HCT116 (cell line): ENCODE measurements at regions of chr3 and their contacts with region 1.

Region 1: GRCh38 chr3:107740992-107741896 is 218.5 kb downstream of the BBX start:
- DNase-seq: no peak
- ATAC-seq: no peak
- H3K4me3 ChIP-seq: no peak overlapping the region
- H3K27ac ChIP-seq: no peak overlapping the region
- H3K4me1 ChIP-seq: no peaks in the 10 kb centered on the region
- H3K27me3 ChIP-seq: no peaks in the 10 kb centered on the region
- CTCF ChIP-seq: peak; percentile 19 to 55 (median 35); a peak in 3 of 6 replicates
- POLR2A ChIP-seq: no peak
- RAD21 ChIP-seq: peak; percentile 51

Region 2: DNA sequence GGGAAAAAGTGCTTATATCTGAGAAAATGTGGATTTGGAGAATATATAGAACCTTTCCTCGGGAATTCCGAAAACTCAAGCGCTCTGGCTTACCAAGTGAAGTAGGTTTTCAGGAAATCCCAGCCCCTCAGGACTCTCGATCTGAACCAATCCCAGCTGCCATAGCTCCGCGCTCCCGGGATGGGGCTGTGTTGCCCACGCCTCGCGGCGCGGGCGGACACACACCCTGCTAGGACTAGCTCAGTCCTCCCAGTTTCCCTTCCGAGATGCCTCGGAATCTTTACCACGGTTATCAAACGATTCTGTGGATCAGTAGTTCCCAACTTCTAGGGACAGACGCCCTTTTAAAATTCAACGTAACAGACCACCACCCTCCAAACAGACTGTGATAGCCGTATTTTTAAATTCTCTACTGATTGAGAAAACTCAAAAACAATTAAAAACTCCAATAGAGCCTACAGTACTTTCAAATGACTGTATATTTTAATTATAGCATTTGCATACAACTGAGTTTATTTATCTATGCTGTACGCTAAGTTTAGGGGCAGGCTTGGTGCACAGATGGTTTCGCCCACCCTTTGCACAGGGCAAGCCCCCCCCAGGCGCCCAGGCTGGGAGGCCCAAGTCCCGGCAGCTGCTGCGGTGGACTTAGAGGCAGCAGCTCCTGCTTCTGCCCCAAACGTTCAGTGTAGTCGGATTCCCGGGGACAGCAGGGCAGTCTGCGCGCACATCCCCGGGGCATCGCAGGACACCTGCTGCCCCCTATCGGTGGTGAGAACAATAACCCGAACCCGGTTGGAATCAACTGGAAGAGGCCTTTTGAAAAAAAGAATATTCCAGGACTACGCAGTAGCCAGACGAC is 311.7 kb before region 1 on chr3:
- CTCF ChIA-PET with region 1: no interaction called
- POLR2A ChIA-PET with region 1: no interaction called
- RAD21 ChIA-PET with region 1: no interaction called
- intact Hi-C with region 1: loop called (anchors 10 kb)
- DNase-seq: peak; percentile 67
- ATAC-seq: peak; percentile 87
- H3K4me3 ChIP-seq: 0 out of 4 replicates have a peak overlapping the region, but pooled peaks of 1 of the 2 experiments have one; percentile 10
- H3K27ac ChIP-seq: no peak overlapping the region
- H3K4me1 ChIP-seq: peaks cover 5 to 33% of the 10 kb centered on the region in 2 experiments; a peak in 3 of 4 replicates
- H3K27me3 ChIP-seq: no peaks in the 10 kb centered on the region
- CTCF ChIP-seq: peak; percentile 61 to 93 (median 86)
- POLR2A ChIP-seq: no peak
- RAD21 ChIP-seq: peak; percentile 74

Region 3: DNA sequence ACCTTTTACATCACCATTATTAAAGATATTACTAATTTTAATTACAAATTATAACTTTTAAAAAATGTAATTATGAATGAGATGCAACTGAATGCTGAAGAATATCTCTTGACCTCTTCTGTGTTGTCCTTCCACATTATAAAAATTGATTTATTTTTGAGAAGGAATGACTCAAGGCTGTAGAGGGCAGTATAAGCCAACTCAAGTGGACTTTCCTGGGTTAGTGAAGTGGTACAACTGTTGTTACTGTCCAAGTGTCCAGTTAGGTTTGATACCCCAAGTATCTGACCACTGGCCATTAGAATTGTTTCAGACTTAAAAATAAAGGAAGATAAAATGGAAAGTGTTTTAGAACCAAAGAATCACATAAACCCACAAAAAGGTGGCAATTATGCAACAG is 166.6 kb before region 1 on chr3:
- CTCF ChIA-PET with region 1: interaction called, 8 read pairs
- POLR2A ChIA-PET with region 1: no interaction called
- RAD21 ChIA-PET with region 1: no interaction called
- intact Hi-C with region 1: loop called (anchors 5 kb)
- DNase-seq: peak; percentile 2
- ATAC-seq: peak; percentile 86
- H3K4me3 ChIP-seq: no peak overlapping the region
- H3K27ac ChIP-seq: no peak overlapping the region
- H3K4me1 ChIP-seq: no peaks in the 10 kb centered on the region
- H3K27me3 ChIP-seq: no peaks in the 10 kb centered on the region
- CTCF ChIP-seq: peak; percentile 38 to 60 (median 59); a peak in 5 of 6 replicates
- POLR2A ChIP-seq: no peak
- RAD21 ChIP-seq: peak; percentile 60

Region 4: GRCh38 chr3:107660306-107660976 is 80.8 kb before region 1 on chr3:
- CTCF ChIA-PET with region 1: interaction called, 19 read pairs
- POLR2A ChIA-PET with region 1: no interaction called
- RAD21 ChIA-PET with region 1: interaction called in 1 of 2 experiments, 3 read pairs
- intact Hi-C with region 1: no loop called
- DNase-seq: peak; percentile 19
- ATAC-seq: no peak
- H3K4me3 ChIP-seq: no peak overlapping the region
- H3K27ac ChIP-seq: no peak overlapping the region
- H3K4me1 ChIP-seq: no peaks in the 10 kb centered on the region
- H3K27me3 ChIP-seq: no peaks in the 10 kb centered on the region
- CTCF ChIP-seq: peak; percentile 24 to 75 (median 60); a peak in 5 of 6 replicates
- POLR2A ChIP-seq: no peak
- RAD21 ChIP-seq: peak; percentile 42; the same call in 1 of the 2 replicates

Region 5: GRCh38 chr3:107676469-107677309 is 64.6 kb before region 1 on chr3:
- CTCF ChIA-PET with region 1: interaction called, 84 read pairs
- POLR2A ChIA-PET with region 1: no interaction called
- RAD21 ChIA-PET with region 1: interaction called in 1 of 2 experiments, 4 read pairs
- intact Hi-C with region 1: loop called (anchors 1 kb)
- DNase-seq: peak; percentile 4
- ATAC-seq: peak; percentile 64
- H3K4me3 ChIP-seq: no peak overlapping the region
- H3K27ac ChIP-seq: no peak overlapping the region
- H3K4me1 ChIP-seq: no peaks in the 10 kb centered on the region
- H3K27me3 ChIP-seq: no peaks in the 10 kb centered on the region
- CTCF ChIP-seq: peak; percentile 31 to 58 (median 35); a peak in 5 of 6 replicates
- POLR2A ChIP-seq: no peak
- RAD21 ChIP-seq: peak; percentile 54

Region 6: GRCh38 chr3:107690522-107691138 is 50.6 kb before region 1 on chr3:
- CTCF ChIA-PET with region 1: interaction called, 38 read pairs
- POLR2A ChIA-PET with region 1: no interaction called
- RAD21 ChIA-PET with region 1: interaction called in 1 of 2 experiments, 4 read pairs
- intact Hi-C with region 1: no loop called
- DNase-seq: peak; percentile 28
- ATAC-seq: peak; percentile 47; the same call in 1 of the 2 replicates
- H3K4me3 ChIP-seq: no peak overlapping the region
- H3K27ac ChIP-seq: no peak overlapping the region
- H3K4me1 ChIP-seq: no peaks in the 10 kb centered on the region
- H3K27me3 ChIP-seq: no peaks in the 10 kb centered on the region
- CTCF ChIP-seq: peak; percentile 9 to 65 (median 39); a peak in 4 of 6 replicates
- POLR2A ChIP-seq: no peak
- RAD21 ChIP-seq: peak; percentile 24; the same call in 1 of the 2 replicates